GM12878 (cell line): ENCODE measurements at regions of chr5 and their contacts with region 1.

Region 1: DNA sequence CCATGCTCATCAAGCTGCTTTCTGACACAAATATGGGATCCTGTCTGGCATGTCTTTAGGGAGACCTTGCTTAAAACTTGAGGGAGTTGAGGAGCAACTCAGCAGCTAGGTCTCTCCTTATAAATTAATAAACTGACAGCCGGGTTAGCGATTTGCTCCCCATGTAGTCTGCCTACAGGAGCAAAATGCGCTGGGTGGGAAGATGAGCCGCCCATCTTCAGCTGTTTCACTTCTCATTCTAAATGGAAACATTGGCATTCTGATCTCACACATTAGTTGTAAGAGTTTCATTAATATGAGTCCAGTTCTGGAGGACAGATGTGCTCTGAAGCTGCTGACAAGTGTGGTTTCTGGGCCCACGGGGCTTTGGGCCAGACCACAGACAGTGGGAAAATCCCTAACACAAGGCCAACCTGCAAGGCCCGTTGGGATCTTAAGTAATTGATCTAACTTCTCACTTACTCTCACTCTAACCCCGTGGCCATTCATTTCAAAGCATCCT is 197.0 kb downstream of the MCTP1 start:
- DNase-seq: peak; percentile 85
- ATAC-seq: peak; percentile 90
- H3K4me3 ChIP-seq: peak overlapping the region; percentile 20; the same call in 1 of the 2 replicates
- H3K27ac ChIP-seq: peak overlapping the region; percentile 88
- H3K4me1 ChIP-seq: peaks cover 16% of the 10 kb centered on the region
- H3K27me3 ChIP-seq: no peaks in the 10 kb centered on the region
- CTCF ChIP-seq: no peak
- EP300 ChIP-seq: peak; percentile 83 to 86; a peak in 3 of 4 replicates
- POLR2A ChIP-seq: no peak
- RAD21 ChIP-seq: no peak

Region 2: DNA sequence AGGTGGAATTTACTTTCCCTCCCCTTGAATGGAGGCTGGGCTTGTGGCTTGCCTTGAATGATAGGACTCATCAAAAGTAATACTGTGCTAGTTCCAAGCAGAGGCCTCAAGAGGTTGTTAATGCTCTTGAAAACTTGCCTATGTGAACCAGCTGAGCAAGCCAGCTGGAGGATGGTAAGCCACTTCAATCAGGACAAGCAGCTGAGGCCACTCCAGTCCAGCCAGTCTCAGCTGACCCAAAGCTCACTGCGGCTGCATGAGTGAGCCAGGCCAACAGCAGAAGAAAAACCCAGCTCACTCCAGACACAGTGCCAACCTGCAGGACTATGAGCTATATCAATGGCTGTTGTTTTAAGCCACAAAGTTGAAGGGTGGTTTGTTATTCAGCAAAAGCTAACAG is 14.2 kb after region 1 on chr5:
- CTCF ChIA-PET with region 1: interaction called, 9 read pairs
- POLR2A ChIA-PET with region 1: interaction called, 6 read pairs
- RAD21 ChIA-PET with region 1: interaction called, 8 read pairs
- SMC1A ChIA-PET with region 1: interaction called, 8 read pairs
- in situ Hi-C with region 1: no loop called
- intact Hi-C with region 1: loop called (anchors 2 kb)
- DNase-seq: no peak
- ATAC-seq: peak; percentile 66
- H3K4me3 ChIP-seq: no peak overlapping the region
- H3K27ac ChIP-seq: no peak overlapping the region
- H3K4me1 ChIP-seq: no peaks in the 10 kb centered on the region
- H3K27me3 ChIP-seq: no peaks in the 10 kb centered on the region
- CTCF ChIP-seq: no peak
- EP300 ChIP-seq: no peak
- POLR2A ChIP-seq: no peak
- RAD21 ChIP-seq: no peak